Activated CD8-positive, alpha-beta T cell treated with anti-CD3 and anti-CD28 coated beads for 36 hours (primary cell): ENCODE measurements at regions of chr1 and their contacts with region 1.

Region 1: DNA sequence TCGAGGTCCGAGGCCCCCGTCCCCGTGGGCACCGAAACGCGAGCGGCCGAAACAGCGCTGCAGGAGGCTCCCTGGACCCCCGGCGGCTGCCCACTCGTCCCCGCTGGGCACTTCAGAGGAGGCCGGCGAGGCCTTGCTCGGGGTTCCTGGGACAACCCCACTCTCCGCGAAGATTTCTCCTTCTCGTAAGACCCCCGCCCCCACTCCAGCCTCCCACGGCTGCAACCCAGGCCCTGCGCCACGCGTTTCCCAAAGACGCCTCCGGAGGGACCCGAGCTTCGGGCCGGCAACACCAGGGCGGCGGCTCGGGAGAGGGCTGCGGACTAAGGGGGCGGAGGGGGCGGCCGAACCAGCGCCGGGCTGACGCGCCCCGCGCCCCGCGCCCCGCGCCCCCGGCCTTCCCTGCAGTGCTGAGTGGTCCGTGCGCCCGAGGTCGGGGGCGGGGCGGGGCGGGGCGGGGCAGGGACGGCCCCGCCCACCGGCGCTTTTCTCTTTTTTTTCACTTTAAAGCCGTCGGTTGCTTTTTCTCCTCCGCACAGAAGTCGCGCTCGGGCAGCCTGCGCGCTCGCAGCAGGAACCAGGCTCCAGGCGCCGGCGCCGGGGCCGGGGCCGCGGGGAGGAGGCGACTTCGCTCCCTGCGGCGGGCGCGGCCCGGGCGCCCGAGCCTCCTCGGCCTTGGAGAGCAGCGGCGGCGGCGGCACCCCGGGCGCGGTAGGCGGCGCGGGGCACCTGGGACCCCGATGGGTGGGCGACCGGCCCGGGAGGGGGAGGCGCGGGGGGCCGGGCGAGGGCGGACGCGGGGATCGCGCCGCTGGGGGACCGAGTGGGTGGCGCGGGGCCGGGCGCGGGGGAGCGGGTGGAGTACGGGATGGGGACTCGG is at the start of gene SPSB1:
- DNase-seq: peak; percentile 72
- ATAC-seq: peak; percentile 57
- H3K4me3 Mint-ChIP-seq: peak within 1 kb of the TSS; percentile 30
- H3K27ac Mint-ChIP-seq: no peak within 1 kb of the TSS
- H3K4me1 Mint-ChIP-seq: peaks cover 14% of the 10 kb centered on the region
- H3K27me3 Mint-ChIP-seq: peaks cover 2% of the 10 kb centered on the region
- CTCF ChIP-seq: no peak
- total RNA-seq, gene SPSB1: 1.1 to 1.5 TPM

Region 2: DNA sequence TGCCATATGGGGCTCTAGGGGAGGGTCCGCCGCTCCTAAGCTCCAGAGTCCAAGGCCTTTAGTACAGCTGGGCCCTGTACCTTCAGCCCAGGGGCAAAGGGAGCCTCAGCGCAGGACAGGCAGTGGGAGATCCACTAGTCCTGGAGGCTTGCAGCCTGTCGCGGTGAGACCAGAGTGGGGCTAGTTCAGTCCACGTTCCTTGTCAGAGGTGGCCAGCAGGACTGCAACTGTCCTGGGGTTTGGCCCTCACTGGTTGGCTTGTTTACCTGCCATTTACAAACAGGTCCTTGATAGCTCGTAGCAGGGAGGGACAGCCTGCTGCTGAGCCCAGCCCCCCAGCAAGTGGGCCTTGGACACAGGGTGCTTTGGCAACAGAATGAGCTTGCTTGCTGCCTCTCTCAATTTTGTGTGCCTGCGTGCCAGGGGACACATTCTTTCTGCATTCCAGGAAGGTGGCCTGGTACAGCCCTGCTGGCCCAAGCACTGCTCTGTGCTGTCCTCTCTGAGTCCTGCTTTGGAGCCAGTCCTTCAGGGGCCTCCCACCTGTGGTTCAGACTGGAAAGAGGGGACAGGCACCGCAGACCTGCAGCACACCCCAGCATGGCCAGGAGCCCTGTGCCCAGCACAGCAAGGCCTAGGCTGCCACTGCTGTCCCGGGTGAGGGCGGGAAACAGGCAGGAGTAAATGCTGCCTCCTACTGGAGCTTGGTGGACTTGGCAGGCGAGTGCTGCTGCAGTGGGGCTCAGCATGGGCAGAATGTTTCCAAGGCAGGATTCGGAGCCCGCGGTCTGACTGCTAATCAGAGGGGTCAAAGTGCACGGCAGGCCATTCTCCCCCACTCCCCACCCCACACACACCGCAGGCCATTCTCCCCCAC is 42.8 kb before region 1 on chr1:
- CTCF ChIA-PET with region 1: no interaction called
- POLR2A ChIA-PET with region 1: no interaction called
- intact Hi-C with region 1: no loop called
- DNase-seq: peak; percentile 60
- ATAC-seq: peak; percentile 85
- H3K4me3 Mint-ChIP-seq: no peak overlapping the region
- H3K27ac Mint-ChIP-seq: no peak overlapping the region
- H3K4me1 Mint-ChIP-seq: peaks cover 3% of the 10 kb centered on the region
- H3K27me3 Mint-ChIP-seq: no peaks in the 10 kb centered on the region
- CTCF ChIP-seq: peak; percentile 56

Region 3: DNA sequence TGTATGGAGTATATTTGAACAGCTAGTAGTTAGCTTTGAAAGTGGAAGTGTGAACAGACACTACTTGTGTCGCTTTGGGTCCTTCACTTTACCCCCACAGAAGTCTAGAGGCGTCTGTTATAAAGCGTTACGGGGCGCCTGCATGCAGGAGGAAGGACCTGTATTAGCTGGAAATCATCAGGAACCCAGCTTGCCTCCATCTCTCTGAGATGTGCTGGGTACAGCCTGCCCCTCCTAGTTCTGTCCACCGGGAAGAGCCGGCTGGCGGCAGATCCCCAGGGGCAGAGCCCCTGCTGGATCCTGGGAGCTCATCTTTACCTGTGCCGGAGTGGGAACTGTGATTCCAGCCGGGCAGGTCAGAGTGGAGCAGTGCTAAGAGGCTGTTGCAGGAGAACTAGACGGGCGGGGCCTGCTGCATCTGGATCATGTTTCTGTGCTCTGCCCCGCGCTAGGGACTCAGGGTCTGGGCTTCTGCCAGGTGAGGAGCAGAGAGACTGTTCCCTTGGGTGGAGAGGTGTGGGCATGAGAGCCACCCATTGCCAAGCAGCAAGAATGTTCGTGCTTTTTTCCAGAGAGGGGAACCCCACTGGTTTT is 22.2 kb before region 1 on chr1:
- CTCF ChIA-PET with region 1: interaction called, 12 read pairs
- POLR2A ChIA-PET with region 1: no interaction called
- intact Hi-C with region 1: no loop called
- DNase-seq: no peak
- ATAC-seq: no peak
- H3K4me3 Mint-ChIP-seq: no peak overlapping the region
- H3K27ac Mint-ChIP-seq: no peak overlapping the region
- H3K4me1 Mint-ChIP-seq: peaks cover 5% of the 10 kb centered on the region
- H3K27me3 Mint-ChIP-seq: no peaks in the 10 kb centered on the region
- CTCF ChIP-seq: no peak

Region 4: GRCh38 chr1:9275567-9276034 is 17.0 kb before region 1 on chr1:
- CTCF ChIA-PET with region 1: interaction called, 15 read pairs
- POLR2A ChIA-PET with region 1: interaction called, 4 read pairs
- intact Hi-C with region 1: no loop called
- DNase-seq: peak; percentile 92
- ATAC-seq: peak; percentile 80
- H3K4me3 Mint-ChIP-seq: no peak overlapping the region
- H3K27ac Mint-ChIP-seq: no peak overlapping the region
- H3K4me1 Mint-ChIP-seq: peaks cover 31% of the 10 kb centered on the region
- H3K27me3 Mint-ChIP-seq: no peaks in the 10 kb centered on the region
- CTCF ChIP-seq: no peak

Region 5: DNA sequence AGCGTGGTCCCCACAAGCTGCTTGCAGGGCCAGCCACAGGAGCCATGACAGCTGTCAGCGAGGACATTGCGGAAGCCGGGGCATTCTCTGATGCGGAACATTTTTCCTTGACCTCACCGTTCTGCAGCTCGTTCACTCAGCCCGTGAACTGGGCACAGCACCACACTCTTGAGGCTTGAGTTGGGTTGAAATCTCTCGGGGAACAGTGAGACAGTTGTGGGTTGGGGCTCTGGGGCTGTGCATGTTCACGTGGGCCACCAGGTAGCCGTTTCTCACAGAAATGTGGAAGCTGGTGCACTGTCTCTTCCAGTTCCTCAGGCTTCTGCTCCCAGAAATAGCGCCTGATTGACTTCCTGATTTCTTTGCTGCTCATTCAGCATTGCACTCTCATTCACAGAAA is 69.9 kb after region 1 on chr1:
- CTCF ChIA-PET with region 1: no interaction called
- POLR2A ChIA-PET with region 1: no interaction called
- intact Hi-C with region 1: no loop called
- DNase-seq: no peak
- ATAC-seq: no peak
- H3K4me3 Mint-ChIP-seq: no peak overlapping the region
- H3K27ac Mint-ChIP-seq: no peak overlapping the region
- H3K4me1 Mint-ChIP-seq: no peaks in the 10 kb centered on the region
- H3K27me3 Mint-ChIP-seq: no peaks in the 10 kb centered on the region
- CTCF ChIP-seq: no peak

Region 6: GRCh38 chr1:9455487-9456234 is 163.1 kb after region 1 on chr1:
- CTCF ChIA-PET with region 1: interaction called, 129 read pairs
- POLR2A ChIA-PET with region 1: interaction called, 4 read pairs
- intact Hi-C with region 1: loop called (anchors 2 kb)
- DNase-seq: peak; percentile 81
- ATAC-seq: peak; percentile 80
- H3K4me3 Mint-ChIP-seq: no peak overlapping the region
- H3K27ac Mint-ChIP-seq: no peak overlapping the region
- H3K4me1 Mint-ChIP-seq: no peaks in the 10 kb centered on the region
- H3K27me3 Mint-ChIP-seq: no peaks in the 10 kb centered on the region
- CTCF ChIP-seq: peak; percentile 90

Region 7: DNA sequence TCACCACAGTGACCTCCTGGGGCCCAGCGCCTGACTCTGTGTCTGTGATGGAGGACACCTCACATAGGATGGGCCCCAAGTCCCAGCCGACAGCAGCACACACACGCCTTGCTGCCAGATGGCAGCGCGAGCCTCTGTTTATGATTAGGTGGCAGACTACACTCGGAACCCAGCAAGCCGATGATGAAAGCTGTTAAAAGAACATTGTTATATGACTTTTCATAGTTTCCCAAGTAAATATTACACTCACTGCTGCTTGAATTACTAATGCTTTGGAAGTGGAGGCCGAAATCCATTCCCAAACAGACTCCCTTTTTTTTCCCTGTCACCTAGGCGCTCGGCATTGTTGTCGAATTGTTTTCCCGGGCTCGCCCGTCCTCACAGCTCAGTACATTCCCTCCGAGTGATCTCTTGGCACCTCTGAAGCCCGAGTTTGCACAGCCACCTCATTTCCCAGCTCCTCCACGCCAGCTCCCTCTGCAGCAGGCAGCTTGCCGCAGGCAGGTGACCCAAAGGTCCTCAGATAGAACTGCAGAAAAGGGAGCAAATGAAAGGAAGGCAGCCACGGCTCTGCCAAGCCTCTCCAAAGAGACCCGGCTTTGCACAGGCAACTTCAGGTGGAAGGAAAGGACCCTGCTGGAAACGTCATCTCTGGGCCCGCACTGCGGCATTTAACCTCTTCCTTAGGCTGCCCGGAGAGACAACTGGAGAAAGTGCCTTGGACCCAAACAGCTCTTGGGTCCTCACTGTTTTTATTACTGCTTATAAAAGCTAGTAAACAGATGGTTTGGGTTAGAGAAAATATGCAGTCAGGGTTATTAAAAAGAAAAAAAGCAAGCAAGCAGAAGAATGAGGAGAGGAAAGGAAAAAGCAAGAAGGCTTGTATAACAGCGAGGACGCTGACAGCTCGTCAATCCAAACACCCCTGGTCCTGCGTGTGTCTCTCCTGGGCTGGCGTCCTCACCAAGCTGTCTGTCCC is 174.5 kb after region 1 on chr1:
- CTCF ChIA-PET with region 1: interaction called, 10 read pairs
- POLR2A ChIA-PET with region 1: no interaction called
- intact Hi-C with region 1: no loop called
- DNase-seq: no peak
- ATAC-seq: no peak
- H3K4me3 Mint-ChIP-seq: no peak overlapping the region
- H3K27ac Mint-ChIP-seq: no peak overlapping the region
- H3K4me1 Mint-ChIP-seq: no peaks in the 10 kb centered on the region
- H3K27me3 Mint-ChIP-seq: peaks cover 7% of the 10 kb centered on the region
- CTCF ChIP-seq: no peak